ENCODE measurements at regions of chr4 and their contacts with region 1.

Region 1: DNA sequence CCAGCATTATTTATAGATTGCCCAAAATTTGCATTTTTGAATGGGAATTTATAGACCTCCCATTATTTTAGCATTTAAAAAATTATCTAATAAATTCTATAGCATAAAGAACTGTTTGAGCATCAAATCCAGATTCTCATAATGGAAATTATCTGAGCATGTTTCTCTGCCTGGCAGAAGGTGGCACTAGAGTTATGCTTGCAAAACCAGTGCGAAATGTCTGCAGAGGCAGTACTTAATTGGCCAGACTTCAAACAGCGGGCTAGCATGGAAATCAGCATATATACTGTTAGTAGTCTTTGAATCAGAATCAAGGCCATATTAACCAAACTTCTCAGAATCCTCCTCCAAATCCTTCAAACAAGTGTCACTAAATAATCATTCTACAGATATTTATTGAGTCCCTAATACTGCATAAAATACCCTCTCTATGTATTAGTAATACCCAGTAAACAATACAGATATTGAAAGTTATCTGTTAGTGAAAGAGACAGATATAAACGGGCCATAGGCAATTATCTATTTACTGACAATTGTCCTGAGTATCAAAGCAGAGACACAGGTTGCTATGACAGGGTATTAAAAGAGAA is 78.7 kb upstream of the DCLK2 start:
- DNase-seq: peak; percentile 36
- H3K4me3 ChIP-seq: no peak overlapping the region
- H3K27ac ChIP-seq: no peak overlapping the region
- H3K4me1 ChIP-seq: no peaks in the 10 kb centered on the region
- H3K27me3 ChIP-seq: no peaks in the 10 kb centered on the region
- CTCF ChIP-seq: peak; percentile 53

Region 2: GRCh38 chr4:150038335-150039076 is 38.9 kb after region 1 on chr4:
- intact Hi-C with region 1: no loop called
- DNase-seq: no peak
- H3K4me3 ChIP-seq: no peak overlapping the region
- H3K27ac ChIP-seq: no peak overlapping the region
- H3K4me1 ChIP-seq: no peaks in the 10 kb centered on the region
- H3K27me3 ChIP-seq: no peaks in the 10 kb centered on the region
- CTCF ChIP-seq: no peak

Region 3: DNA sequence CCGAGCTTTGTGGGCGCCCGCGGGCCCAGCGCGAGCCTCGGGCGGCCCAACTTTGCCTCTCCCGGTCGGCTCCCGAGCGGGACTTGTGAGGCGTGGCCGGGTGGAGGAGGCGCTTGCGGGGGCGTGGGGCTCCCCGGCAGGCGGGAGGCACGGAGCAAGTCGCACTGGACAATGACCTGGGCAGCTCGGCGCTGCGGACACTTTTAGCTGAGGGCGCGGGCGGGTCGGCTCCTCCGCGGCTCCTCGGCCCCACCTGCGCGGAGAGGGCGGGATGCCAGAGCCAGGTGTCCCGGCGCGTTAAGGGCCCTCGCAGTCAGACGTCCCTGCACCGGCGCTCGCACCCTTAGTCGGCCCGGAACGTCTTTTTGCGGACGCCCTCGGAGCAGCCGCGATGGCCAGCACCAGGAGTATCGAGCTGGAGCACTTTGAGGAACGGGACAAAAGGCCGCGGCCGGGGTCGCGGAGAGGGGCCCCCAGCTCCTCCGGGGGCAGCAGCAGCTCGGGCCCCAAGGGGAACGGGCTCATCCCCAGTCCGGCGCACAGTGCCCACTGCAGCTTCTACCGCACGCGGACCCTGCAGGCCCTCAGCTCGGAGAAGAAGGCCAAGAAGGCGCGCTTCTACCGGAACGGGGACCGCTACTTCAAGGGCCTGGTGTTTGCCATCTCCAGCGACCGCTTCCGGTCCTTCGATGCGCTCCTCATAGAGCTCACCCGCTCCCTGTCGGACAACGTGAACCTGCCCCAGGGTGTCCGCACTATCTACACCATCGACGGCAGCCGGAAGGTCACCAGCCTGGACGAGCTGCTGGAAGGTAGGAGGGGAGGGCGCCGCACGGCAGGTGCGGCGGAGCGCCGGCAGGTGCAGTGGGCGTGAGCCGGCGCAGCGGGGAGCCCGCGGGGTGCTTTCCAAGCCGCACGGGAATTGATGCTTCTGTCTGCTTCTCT is 79.3 kb after region 1 on chr4:
- intact Hi-C with region 1: loop called (anchors 10 kb)
- DNase-seq: peak; percentile 68
- H3K4me3 ChIP-seq: peak overlapping the region; percentile 60
- H3K27ac ChIP-seq: peak overlapping the region; percentile 65
- H3K4me1 ChIP-seq: no peaks in the 10 kb centered on the region
- H3K27me3 ChIP-seq: no peaks in the 10 kb centered on the region
- CTCF ChIP-seq: no peak

Region 4: DNA sequence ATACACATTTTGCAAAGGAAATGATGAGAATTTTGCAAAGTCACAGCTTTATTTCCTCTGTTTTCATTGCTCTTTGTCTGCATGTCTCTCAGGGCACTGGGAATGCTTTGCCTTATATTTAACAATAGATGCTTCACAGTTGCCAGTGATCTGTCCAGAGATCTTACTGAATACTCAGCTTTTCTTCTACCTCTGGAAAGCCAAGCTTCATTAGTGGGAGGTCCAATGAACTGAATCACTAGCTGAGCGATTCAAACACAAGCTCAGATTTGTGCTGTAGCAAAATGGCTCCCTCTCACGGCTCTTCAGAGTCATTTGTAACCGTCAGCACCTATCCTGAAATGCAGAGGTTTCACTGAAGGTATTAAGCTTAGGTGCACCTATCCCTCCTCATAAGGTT is 217.6 kb after region 1 on chr4:
- intact Hi-C with region 1: loop called (anchors 10 kb)
- DNase-seq: no peak
- H3K4me3 ChIP-seq: no peak overlapping the region
- H3K27ac ChIP-seq: no peak overlapping the region
- H3K4me1 ChIP-seq: no peaks in the 10 kb centered on the region
- H3K27me3 ChIP-seq: no peaks in the 10 kb centered on the region
- CTCF ChIP-seq: no peak

Region 5: DNA sequence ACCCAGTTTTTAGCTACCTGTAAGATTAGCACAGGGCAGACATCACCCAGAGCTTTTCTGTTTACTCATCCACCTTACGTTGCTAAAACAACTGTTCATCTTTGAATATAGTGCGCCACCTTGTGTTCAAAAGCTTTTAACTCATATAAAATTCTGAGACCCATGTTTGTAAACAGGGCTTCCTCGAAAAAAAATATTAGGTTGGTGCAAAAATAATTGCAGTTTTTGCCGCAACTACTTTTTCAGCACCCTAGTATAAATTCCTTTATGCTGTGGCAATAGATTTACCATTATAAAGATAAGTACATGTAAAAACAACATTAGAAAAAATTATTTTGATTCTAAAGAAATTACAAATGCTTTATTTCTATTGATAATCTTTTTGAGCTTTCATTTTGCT is 867.6 kb after region 1 on chr4:
- intact Hi-C with region 1: loop called (anchors 10 kb)
- DNase-seq: peak; percentile 50
- H3K4me3 ChIP-seq: no peak overlapping the region
- H3K27ac ChIP-seq: no peak overlapping the region
- H3K4me1 ChIP-seq: no peaks in the 10 kb centered on the region
- H3K27me3 ChIP-seq: no peaks in the 10 kb centered on the region
- CTCF ChIP-seq: peak; percentile 58